Dendritic cell treated with granulocyte-macrophage colony-stimulating factor and Interleukin-4, amounts not matched to agents 40 ng/mL and 50 ng/mL, for 4 days (primary cell): ENCODE measurements at regions of chr13 and their contacts with region 1.

Region 1: GRCh38 chr13:51583875-51584730 is at the start of gene WDFY2:
- H3K4me3 Mint-ChIP-seq: peak within 1 kb of the TSS; percentile 93
- H3K27ac Mint-ChIP-seq: peak within 1 kb of the TSS; percentile 90
- H3K4me1 Mint-ChIP-seq: peaks cover 54% of the 10 kb centered on the region
- H3K27me3 Mint-ChIP-seq: no peaks in the 10 kb centered on the region

Region 2: DNA sequence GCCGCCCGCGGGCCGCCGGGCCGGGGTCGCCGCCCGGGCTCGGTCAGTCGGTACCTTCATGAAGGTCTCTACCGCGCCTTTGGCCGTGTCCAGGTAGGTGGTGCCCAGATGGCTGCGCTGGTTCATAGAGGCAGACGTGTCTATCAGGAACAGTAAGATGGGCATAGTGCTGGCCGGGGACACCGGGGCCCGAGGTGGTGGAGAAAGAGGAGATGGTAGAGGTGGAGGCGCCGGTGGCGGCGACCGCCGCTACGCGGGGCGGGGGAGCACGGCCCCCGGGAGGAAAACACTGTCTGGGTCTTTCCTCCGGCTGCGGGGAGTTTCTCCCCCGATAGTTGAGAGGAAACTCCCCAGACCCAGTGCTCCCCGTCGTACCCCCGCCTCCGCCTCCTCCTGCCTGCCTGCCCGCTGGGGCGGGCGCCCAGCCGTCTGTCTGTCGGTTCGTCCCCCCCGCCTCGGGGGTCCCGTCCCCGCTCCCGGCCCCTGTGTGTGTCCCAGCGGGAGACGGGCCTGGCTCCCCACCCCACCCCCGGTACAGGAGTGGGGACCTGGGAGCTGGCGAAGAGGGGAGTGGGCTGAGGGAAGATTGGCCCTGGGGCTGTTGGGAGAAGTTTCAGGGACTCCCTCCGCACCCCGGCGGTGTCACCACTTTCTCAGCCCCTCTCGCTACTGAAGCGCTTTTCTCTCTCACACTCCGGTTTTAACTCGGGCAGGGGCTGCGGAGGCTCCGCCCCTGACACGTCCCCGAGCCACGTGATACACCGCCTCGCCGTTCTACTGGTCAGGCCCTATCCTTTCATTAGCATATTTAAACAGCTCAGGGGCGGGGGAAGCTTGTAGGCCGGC is 131.5 kb before region 1 on chr13 and contains the start of gene INTS6:
- intact Hi-C with region 1: loop called (anchors 1 kb)
- H3K4me3 Mint-ChIP-seq: peak within 1 kb of the TSS; percentile 93
- H3K27ac Mint-ChIP-seq: peak within 1 kb of the TSS; percentile 97
- H3K4me1 Mint-ChIP-seq: peaks cover 38% of the 10 kb centered on the region
- H3K27me3 Mint-ChIP-seq: no peaks in the 10 kb centered on the region

Region 3: GRCh38 chr13:51534041-51534817 is 49.9 kb before region 1 on chr13:
- intact Hi-C with region 1: loop called (anchors 10 kb)
- H3K4me3 Mint-ChIP-seq: peak overlapping the region; percentile 13
- H3K27ac Mint-ChIP-seq: peak overlapping the region; percentile 81
- H3K4me1 Mint-ChIP-seq: peaks cover 40% of the 10 kb centered on the region
- H3K27me3 Mint-ChIP-seq: peaks cover 2% of the 10 kb centered on the region

Region 4: DNA sequence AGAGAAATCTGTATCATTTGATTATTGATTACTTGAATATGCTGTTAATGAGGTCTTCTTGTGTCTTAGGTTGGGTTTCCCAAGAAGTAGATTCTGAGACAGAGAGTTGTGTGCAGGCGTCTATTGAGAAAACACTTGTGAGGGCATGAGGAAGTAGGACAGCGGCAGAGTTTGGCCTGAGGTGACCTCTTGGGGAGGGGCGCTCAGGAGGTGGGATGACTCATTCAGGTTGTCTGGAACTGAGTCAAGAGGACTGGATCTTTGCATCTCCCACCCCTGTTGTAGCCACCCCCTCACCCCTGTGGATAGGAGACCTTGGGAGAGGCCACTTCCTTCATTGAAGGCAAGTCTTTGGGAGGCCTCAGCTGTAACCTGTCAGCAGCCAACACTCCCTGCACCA is 35.1 kb before region 1 on chr13:
- intact Hi-C with region 1: no loop called
- H3K4me3 Mint-ChIP-seq: no peak overlapping the region
- H3K27ac Mint-ChIP-seq: peak overlapping the region; percentile 72
- H3K4me1 Mint-ChIP-seq: peaks cover 39% of the 10 kb centered on the region
- H3K27me3 Mint-ChIP-seq: no peaks in the 10 kb centered on the region

Region 5: DNA sequence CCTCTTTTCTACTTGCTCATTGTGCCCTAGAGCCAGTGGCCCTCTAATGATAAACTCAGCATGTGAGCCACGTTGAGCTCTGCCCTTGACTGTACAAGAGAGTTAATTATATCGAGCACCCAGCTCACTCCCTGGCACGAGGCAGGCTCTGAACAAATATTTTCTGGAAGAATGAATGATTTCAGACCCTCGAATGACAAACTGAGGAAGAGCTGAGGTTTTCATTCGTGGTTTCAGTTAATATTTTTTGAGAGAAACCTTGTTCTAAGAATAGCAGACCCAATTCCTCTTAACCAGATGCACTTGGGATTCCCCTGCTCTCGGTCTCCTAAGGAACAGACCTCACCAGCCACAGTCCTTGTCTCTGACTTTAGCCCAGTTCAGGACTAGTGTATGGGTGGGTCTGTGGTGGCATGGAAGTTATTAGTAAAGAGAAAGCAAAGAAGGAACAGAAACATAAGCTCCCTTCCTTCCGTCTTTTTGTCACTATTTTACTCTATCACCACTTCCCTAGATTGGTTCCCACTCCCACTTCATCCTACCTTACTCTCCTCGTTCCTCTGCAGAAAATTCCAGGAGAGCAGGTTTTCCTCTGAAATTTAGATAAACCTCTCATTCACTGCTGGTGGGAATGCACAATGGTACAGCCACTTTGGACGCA is 22.0 kb before region 1 on chr13:
- intact Hi-C with region 1: loop called (anchors 1 kb)
- H3K4me3 Mint-ChIP-seq: peak overlapping the region; percentile 40
- H3K27ac Mint-ChIP-seq: peak overlapping the region; percentile 79
- H3K4me1 Mint-ChIP-seq: peaks cover 78% of the 10 kb centered on the region
- H3K27me3 Mint-ChIP-seq: no peaks in the 10 kb centered on the region

Region 6: DNA sequence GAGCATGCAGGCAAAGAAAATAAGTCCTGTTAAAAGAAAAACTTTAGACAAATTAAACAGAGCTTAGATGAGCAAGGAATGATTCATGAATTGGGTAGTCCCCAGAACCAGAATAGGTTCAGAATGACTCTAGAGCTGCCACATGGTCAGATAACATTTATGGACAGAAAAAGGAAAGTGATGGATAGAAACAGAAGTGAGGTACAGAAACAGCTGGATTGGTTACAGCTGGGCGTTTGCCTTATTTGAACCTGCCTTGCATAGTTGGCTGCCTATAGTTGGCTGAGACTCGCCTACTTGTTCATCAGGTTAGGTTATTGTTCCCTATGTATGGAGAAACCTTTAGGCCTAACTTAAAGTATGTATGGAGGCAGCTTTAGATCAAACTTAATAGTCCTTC is 35.5 kb after region 1 on chr13:
- intact Hi-C with region 1: loop called (anchors 5 kb)
- H3K4me3 Mint-ChIP-seq: no peak overlapping the region
- H3K27ac Mint-ChIP-seq: peak overlapping the region; percentile 76
- H3K4me1 Mint-ChIP-seq: peaks cover 77% of the 10 kb centered on the region
- H3K27me3 Mint-ChIP-seq: no peaks in the 10 kb centered on the region

Region 7: GRCh38 chr13:51803422-51804294 is 219.6 kb after region 1 on chr13 and contains the start of gene DHRS12:
- intact Hi-C with region 1: loop called (anchors 5 kb)
- H3K4me3 Mint-ChIP-seq: peak within 1 kb of the TSS; percentile 82
- H3K27ac Mint-ChIP-seq: peak within 1 kb of the TSS; percentile 90
- H3K4me1 Mint-ChIP-seq: peaks cover 48% of the 10 kb centered on the region
- H3K27me3 Mint-ChIP-seq: peaks cover 17% of the 10 kb centered on the region